ENCODE measurements at regions of chr2 and their contacts with region 1.

Region 1: GRCh38 chr2:84925724-84926376 is 20.4 kb downstream of the TMSB10 start:
- DNase-seq: peak; percentile 94 to 99 (median 97)
- ATAC-seq: peak; percentile 90
- H3K4me3 ChIP-seq: peak overlapping the region; percentile 77
- H3K4me3 Mint-ChIP-seq: peak overlapping the region; percentile 91 to 100 (median 94)
- H3K27ac ChIP-seq: peak overlapping the region; percentile 69
- H3K27ac Mint-ChIP-seq: peak overlapping the region; percentile 91 to 100 (median 96)
- H3K4me1 ChIP-seq: peaks cover 23 to 29% of the 10 kb centered on the region in 2 donors
- H3K4me1 Mint-ChIP-seq: peaks cover 25 to 55% (median 47%) of the 10 kb centered on the region in 7 donors
- H3K27me3 ChIP-seq: no peaks in the 10 kb centered on the region
- H3K27me3 Mint-ChIP-seq: no peaks in the 10 kb centered on the region

Region 2: DNA sequence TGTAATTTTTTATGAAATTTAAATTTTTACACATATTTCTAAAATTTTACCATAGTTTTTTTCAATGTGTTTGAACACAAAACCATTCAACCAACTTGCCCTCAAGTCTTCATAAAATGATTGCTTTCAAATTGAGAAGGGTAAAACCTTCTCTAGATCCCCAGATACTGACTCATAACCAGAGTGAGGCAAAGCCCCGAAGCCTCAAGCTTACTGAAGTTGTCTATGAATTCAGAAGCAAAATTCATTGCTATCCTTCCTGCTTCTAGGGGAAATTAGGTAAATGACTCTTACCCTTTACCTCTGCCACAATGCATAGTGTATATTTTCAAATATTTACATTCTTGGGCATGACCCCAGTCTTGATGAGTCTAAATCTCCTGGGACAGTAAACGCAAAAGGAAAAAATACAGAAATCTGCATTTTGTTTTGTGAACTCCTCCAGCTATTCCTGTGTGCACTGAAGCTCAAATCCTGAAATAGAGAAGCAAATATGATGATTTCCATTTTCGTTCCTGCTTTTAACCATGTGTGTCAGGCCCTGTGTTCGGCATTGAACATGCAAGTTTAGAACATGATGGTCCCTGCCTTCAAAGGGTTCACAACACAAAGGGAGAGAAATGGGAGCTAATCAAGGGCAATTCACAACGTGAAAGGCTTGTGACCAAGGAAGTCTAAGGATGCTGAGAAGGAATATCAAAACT is 713.1 kb before region 1 on chr2:
- CTCF ChIA-PET with region 1: no interaction called
- POLR2A ChIA-PET with region 1: no interaction called
- intact Hi-C with region 1: no loop called
- DNase-seq: no peak
- ATAC-seq: no peak
- H3K4me3 ChIP-seq: no peak overlapping the region
- H3K4me3 Mint-ChIP-seq: no peak overlapping the region
- H3K27ac ChIP-seq: no peak overlapping the region
- H3K27ac Mint-ChIP-seq: no peak overlapping the region
- H3K4me1 ChIP-seq: no peaks in the 10 kb centered on the region
- H3K4me1 Mint-ChIP-seq: peaks cover 0 to 1% (median 0%) of the 10 kb centered on the region in 7 donors
- H3K27me3 ChIP-seq: no peaks in the 10 kb centered on the region
- H3K27me3 Mint-ChIP-seq: peaks cover 6 to 58% (median 25%) of the 10 kb centered on the region in 5 donors

Region 3: GRCh38 chr2:84495539-84496146 is 430.2 kb before region 1 on chr2:
- CTCF ChIA-PET with region 1: interaction called, 29 read pairs
- POLR2A ChIA-PET with region 1: interaction called, 16 read pairs
- intact Hi-C with region 1: loop called (anchors 1 kb)
- DNase-seq: peak in 7 of 9 donors; percentile 61 to 81 (median 73)
- ATAC-seq: peak; percentile 96
- H3K4me3 ChIP-seq: no peak overlapping the region
- H3K4me3 Mint-ChIP-seq: peak overlapping the region in 1 of 10 donors; percentile 23
- H3K27ac ChIP-seq: no peak overlapping the region
- H3K27ac Mint-ChIP-seq: peak overlapping the region in 7 of 9 donors; percentile 35 to 82 (median 76)
- H3K4me1 ChIP-seq: peaks cover 0 to 5% of the 10 kb centered on the region in 2 donors
- H3K4me1 Mint-ChIP-seq: peaks cover 9 to 31% (median 28%) of the 10 kb centered on the region in 7 donors
- H3K27me3 ChIP-seq: no peaks in the 10 kb centered on the region
- H3K27me3 Mint-ChIP-seq: peaks cover 0 to 14% (median 0%) of the 10 kb centered on the region in 5 donors

Region 4: GRCh38 chr2:84694088-84694622 is 231.7 kb before region 1 on chr2:
- CTCF ChIA-PET with region 1: no interaction called
- POLR2A ChIA-PET with region 1: interaction called, 4 read pairs
- intact Hi-C with region 1: loop called in 1 of 2 experiments (anchors 2 kb)
- DNase-seq: peak in 8 of 9 donors; percentile 11 to 86 (median 79)
- ATAC-seq: peak; percentile 88
- H3K4me3 ChIP-seq: peak overlapping the region; percentile 43
- H3K4me3 Mint-ChIP-seq: peak overlapping the region; percentile 27 to 80 (median 68)
- H3K27ac ChIP-seq: peak overlapping the region; percentile 59
- H3K27ac Mint-ChIP-seq: peak overlapping the region; percentile 82 to 93 (median 87)
- H3K4me1 ChIP-seq: peaks cover 24 to 38% of the 10 kb centered on the region in 2 donors
- H3K4me1 Mint-ChIP-seq: peaks cover 8 to 93% (median 76%) of the 10 kb centered on the region in 7 donors
- H3K27me3 ChIP-seq: no peaks in the 10 kb centered on the region
- H3K27me3 Mint-ChIP-seq: peaks cover 0 to 3% (median 0%) of the 10 kb centered on the region in 5 donors

Region 5: DNA sequence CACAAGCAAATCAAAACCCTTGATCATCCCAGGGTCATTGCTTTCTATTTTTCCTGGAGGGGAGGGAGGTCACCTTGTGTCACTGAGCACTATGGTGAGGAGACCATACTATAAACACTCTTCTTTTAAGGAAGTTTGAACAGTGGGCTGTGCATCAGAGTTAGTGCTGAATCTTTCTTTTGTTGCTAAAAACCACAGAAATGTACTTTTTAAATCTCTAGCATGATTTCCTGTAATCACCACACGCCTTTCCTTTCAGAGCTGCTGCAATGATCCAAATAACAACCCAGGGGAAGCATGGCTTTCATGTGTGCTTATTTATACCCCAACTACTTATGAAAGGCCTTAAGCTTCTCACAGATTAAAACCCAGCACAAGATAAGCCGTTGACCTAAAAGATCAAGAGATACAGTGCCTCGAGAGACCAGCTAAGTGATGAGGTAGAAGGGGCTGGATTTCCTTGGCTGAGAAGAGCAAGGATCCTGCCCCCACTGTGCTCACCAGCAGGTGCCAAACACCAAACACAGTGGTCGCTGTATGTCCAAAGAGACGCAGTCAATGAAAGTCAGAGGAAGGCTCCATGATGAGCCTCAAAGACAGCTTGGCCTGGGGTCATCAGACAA is 79.7 kb before region 1 on chr2:
- CTCF ChIA-PET with region 1: interaction called, 13 read pairs
- POLR2A ChIA-PET with region 1: interaction called, 19 read pairs
- intact Hi-C with region 1: loop called in 1 of 2 experiments (anchors 1 kb)
- DNase-seq: peak in 7 of 9 donors; percentile 68 to 89 (median 84)
- ATAC-seq: peak; percentile 85
- H3K4me3 ChIP-seq: peak overlapping the region; percentile 14
- H3K4me3 Mint-ChIP-seq: peak overlapping the region; percentile 72 to 87 (median 82)
- H3K27ac ChIP-seq: peak overlapping the region; percentile 80
- H3K27ac Mint-ChIP-seq: peak overlapping the region in 8 of 9 donors; percentile 94 to 99 (median 97)
- H3K4me1 ChIP-seq: peaks cover 93 to 98% of the 10 kb centered on the region in 2 donors
- H3K4me1 Mint-ChIP-seq: peaks cover 77 to 100% (median 92%) of the 10 kb centered on the region in 7 donors
- H3K27me3 ChIP-seq: no peaks in the 10 kb centered on the region
- H3K27me3 Mint-ChIP-seq: no peaks in the 10 kb centered on the region

Region 6: DNA sequence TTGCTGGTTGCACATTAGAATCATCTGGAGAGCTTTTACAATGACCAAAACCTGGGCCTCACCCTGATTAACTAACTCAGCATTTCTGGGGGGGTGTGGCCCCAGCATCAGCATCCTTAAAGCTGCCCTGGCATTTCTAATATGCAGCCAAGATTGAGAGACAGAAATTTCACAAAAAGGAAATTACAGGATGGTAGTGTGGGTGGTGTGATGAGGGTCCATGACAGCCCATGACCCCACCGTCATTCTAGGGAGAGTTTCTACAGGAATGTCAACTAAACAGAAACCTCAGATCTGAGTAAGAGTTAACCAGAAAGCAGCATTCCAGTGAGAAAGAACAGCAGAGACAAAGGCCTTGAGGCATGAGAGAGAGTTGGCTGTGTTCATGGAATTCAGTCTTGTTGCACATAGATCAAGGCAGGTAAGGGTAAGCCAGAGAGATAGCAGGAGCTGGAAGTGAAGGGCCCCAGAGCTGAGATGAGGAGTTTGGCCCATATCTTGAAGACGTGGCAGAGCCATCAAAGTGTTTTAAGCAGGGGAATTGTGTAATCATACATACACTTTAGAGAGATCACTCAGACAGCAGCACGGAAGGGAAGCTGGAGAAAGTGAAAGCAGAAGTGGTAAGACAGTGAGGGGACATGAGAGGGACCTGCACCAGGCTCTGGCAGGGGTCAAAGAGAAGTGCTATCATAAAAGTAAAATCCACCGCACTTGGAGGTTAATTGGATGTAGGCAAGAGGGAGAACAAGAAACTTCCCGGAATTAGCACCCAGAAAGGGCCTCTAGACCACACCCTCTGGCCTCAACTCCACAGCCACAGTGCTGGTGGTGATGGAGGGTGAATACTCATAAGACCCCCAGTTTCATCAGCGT is 37.2 kb before region 1 on chr2:
- CTCF ChIA-PET with region 1: interaction called, 82 read pairs
- POLR2A ChIA-PET with region 1: interaction called, 495 read pairs
- intact Hi-C with region 1: no loop called
- DNase-seq: peak in 8 of 9 donors; percentile 46 to 80 (median 72)
- ATAC-seq: peak; percentile 98
- H3K4me3 ChIP-seq: peak overlapping the region; percentile 62
- H3K4me3 Mint-ChIP-seq: peak overlapping the region; percentile 79 to 88 (median 86)
- H3K27ac ChIP-seq: peak overlapping the region; percentile 85
- H3K27ac Mint-ChIP-seq: peak overlapping the region; percentile 92 to 100 (median 97)
- H3K4me1 ChIP-seq: peaks cover 21 to 22% of the 10 kb centered on the region in 2 donors
- H3K4me1 Mint-ChIP-seq: peaks cover 22 to 71% (median 59%) of the 10 kb centered on the region in 7 donors
- H3K27me3 ChIP-seq: no peaks in the 10 kb centered on the region
- H3K27me3 Mint-ChIP-seq: no peaks in the 10 kb centered on the region

Region 7: DNA sequence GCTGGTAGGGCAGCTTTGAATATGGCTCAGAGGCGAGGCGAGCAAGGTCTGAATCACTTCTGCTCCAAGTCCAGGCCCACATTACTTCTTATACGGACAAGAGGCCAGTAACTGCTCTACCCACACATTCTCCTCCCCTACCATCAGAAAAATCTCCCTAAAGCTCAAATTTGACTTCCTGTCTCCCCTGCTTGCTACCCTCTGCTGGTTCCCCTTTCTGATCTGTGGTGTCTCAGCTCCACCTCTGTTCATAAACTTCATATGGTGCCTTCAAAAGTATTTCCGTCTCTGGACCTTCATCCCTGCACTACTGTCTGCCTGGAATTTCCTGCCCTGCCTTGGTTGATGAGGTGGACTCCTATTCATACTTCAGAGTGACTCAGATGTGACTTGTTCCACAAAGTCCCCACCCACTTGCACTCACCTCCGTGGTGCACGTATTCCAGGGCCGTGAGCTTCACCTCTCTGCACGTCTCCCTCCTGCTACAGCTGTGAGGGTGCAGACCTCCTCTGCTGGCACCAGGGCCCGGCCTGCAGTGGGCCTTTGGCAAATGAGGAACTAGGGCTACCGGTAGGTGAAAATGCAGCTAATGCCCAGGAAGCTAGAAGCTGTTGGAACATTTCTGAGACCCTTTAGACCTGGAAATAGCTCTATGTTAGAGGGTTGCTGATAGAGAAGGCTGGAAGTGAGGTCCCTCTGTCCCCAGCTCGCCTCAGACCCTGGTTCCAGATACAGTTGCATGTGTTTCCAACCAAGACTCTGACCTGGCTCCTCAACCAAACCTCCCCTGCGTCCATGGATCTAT is 20.6 kb after region 1 on chr2:
- CTCF ChIA-PET with region 1: interaction called, 49 read pairs
- POLR2A ChIA-PET with region 1: interaction called, 25 read pairs
- intact Hi-C with region 1: loop called (anchors 1 kb)
- DNase-seq: peak; percentile 20 to 74 (median 57)
- ATAC-seq: peak; percentile 90
- H3K4me3 ChIP-seq: peak overlapping the region; percentile 9
- H3K4me3 Mint-ChIP-seq: peak overlapping the region; percentile 43 to 83 (median 72)
- H3K27ac ChIP-seq: peak overlapping the region; percentile 64
- H3K27ac Mint-ChIP-seq: peak overlapping the region; percentile 42 to 93 (median 81)
- H3K4me1 ChIP-seq: peaks cover 16 to 23% of the 10 kb centered on the region in 2 donors
- H3K4me1 Mint-ChIP-seq: peaks cover 27 to 66% (median 32%) of the 10 kb centered on the region in 7 donors
- H3K27me3 ChIP-seq: no peaks in the 10 kb centered on the region
- H3K27me3 Mint-ChIP-seq: no peaks in the 10 kb centered on the region

Region 8: DNA sequence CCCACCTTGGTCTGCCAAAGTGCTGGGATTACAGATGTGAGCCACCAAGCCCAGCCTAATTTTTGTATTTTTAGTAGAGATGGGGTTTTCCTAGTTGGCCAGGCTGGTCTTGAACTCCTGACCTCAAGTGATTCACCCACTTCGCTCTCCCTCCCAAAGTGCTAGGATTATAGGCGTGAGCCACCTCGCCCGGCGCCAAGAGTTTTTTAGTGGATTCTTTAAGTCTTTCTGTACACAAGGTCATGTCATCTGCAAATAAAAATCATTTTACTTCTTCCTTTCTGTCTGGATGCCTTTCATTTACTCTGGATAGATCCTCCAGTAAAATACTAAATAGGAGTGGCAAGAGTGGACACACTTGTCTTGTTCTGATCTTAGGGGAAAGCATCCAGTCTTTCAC is 106.8 kb after region 1 on chr2:
- CTCF ChIA-PET with region 1: no interaction called
- POLR2A ChIA-PET with region 1: no interaction called
- intact Hi-C with region 1: no loop called
- DNase-seq: no peak
- ATAC-seq: no peak
- H3K4me3 ChIP-seq: no peak overlapping the region
- H3K4me3 Mint-ChIP-seq: peak overlapping the region in 1 of 10 donors; percentile 8
- H3K27ac ChIP-seq: no peak overlapping the region
- H3K27ac Mint-ChIP-seq: no peak overlapping the region
- H3K4me1 ChIP-seq: no peaks in the 10 kb centered on the region
- H3K4me1 Mint-ChIP-seq: peaks cover 7 to 35% (median 16%) of the 10 kb centered on the region in 7 donors
- H3K27me3 ChIP-seq: no peaks in the 10 kb centered on the region
- H3K27me3 Mint-ChIP-seq: no peaks in the 10 kb centered on the region

Region 9: GRCh38 chr2:85302121-85302520 is 376.3 kb after region 1 on chr2:
- CTCF ChIA-PET with region 1: interaction called, 13 read pairs
- POLR2A ChIA-PET with region 1: no interaction called
- intact Hi-C with region 1: loop called in 1 of 2 experiments (anchors 1 kb)
- DNase-seq: no peak
- ATAC-seq: no peak
- H3K4me3 ChIP-seq: no peak overlapping the region
- H3K4me3 Mint-ChIP-seq: no peak overlapping the region
- H3K27ac ChIP-seq: no peak overlapping the region
- H3K27ac Mint-ChIP-seq: no peak overlapping the region
- H3K4me1 ChIP-seq: no peaks in the 10 kb centered on the region
- H3K4me1 Mint-ChIP-seq: peaks cover 7 to 22% (median 14%) of the 10 kb centered on the region in 7 donors
- H3K27me3 ChIP-seq: no peaks in the 10 kb centered on the region
- H3K27me3 Mint-ChIP-seq: peaks cover 0 to 23% (median 0%) of the 10 kb centered on the region in 5 donors

Measured in naive thymus-derived CD4-positive, alpha-beta T cell (primary cell).